ENCODE measurements at regions of chr17 and their contacts with region 1.

Region 1: DNA sequence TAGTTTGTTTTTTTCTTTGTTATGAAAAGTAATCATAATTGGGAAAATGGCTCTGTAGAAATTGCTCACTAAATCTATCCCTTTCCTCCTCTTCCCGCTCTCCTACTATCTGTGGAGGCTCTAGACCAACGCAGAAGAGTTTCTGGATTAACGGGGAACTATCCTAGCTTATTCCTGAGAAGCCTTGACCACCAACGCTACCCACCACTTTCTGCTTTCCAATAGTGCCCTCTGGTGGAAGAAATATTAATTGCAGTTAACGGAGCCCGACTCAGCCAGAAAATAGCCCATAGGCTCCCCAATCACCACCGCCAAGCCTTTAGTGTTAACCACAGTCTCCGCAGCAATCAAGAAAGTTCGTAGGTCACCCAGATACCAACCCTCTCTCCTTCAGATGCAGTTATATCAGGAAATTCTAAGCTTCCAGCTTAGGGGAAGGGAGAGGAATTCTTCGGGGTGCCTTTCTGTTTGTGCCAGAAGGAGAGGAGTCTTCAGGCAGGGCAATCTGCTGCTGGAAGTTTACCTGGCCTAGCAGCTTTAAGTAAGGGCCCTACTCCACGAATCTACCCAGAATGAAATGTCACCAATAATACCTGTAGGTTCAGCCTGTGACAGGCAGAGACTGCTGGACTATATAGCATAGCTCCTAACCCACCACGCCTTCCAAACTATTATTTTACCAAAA is 23.0 kb upstream of the NSRP1 start:
- DNase-seq: peak; percentile 72
- ATAC-seq: peak; percentile 92
- H3K4me3 Mint-ChIP-seq: no peak overlapping the region
- H3K27ac Mint-ChIP-seq: no peak overlapping the region
- H3K4me1 Mint-ChIP-seq: 0 out of 2 replicates have a peak, but pooled peaks cover 3% of the 10 kb centered on the region
- H3K27me3 Mint-ChIP-seq: no peaks in the 10 kb centered on the region; the same call in 1 of the 2 replicates
- CTCF ChIP-seq: peak; percentile 94

Region 2: DNA sequence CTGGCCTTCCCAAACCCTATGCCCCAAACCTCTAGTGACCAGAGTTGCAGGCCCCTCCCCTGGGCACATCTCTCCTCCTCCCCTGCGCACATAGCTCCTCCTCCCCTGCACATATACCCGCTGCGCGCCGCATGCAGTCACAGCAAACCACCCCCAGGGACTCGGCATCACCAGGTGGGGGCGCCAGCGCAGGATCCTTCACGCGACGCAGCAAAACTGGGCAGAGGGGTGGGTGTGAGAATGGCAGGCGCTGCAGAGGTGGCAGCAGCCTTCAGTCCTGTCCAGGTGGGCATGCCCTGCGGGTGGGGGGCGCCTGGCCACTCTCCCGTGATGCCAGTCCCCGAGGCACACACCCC is 476.5 kb before region 1 on chr17:
- CTCF ChIA-PET with region 1: interaction called, 30 read pairs
- POLR2A ChIA-PET with region 1: no interaction called
- DNase-seq: peak; percentile 86
- ATAC-seq: peak; percentile 27
- H3K4me3 Mint-ChIP-seq: peak overlapping the region; percentile 80
- H3K27ac Mint-ChIP-seq: no peak overlapping the region
- H3K4me1 Mint-ChIP-seq: peaks cover 53% of the 10 kb centered on the region
- H3K27me3 Mint-ChIP-seq: peaks cover 80% of the 10 kb centered on the region
- CTCF ChIP-seq: peak; percentile 49

Region 3: GRCh38 chr17:29777663-29778062 is 315.9 kb before region 1 on chr17:
- CTCF ChIA-PET with region 1: interaction called, 16 read pairs
- POLR2A ChIA-PET with region 1: no interaction called
- DNase-seq: no peak
- ATAC-seq: no peak
- H3K4me3 Mint-ChIP-seq: no peak overlapping the region
- H3K27ac Mint-ChIP-seq: no peak overlapping the region
- H3K4me1 Mint-ChIP-seq: no peaks in the 10 kb centered on the region
- H3K27me3 Mint-ChIP-seq: no peaks in the 10 kb centered on the region
- CTCF ChIP-seq: no peak

Region 4: GRCh38 chr17:29911641-29912177 is 181.9 kb before region 1 on chr17:
- CTCF ChIA-PET with region 1: no interaction called
- POLR2A ChIA-PET with region 1: no interaction called
- DNase-seq: no peak
- ATAC-seq: no peak
- H3K4me3 Mint-ChIP-seq: no peak overlapping the region
- H3K27ac Mint-ChIP-seq: no peak overlapping the region
- H3K4me1 Mint-ChIP-seq: no peaks in the 10 kb centered on the region
- H3K27me3 Mint-ChIP-seq: no peaks in the 10 kb centered on the region
- CTCF ChIP-seq: no peak

Region 5: GRCh38 chr17:29931231-29931932 is 162.2 kb before region 1 on chr17:
- CTCF ChIA-PET with region 1: interaction called, 36 read pairs
- POLR2A ChIA-PET with region 1: interaction called, 3 read pairs
- DNase-seq: peak; percentile 23
- ATAC-seq: peak; percentile 10
- H3K4me3 Mint-ChIP-seq: no peak overlapping the region
- H3K27ac Mint-ChIP-seq: no peak overlapping the region
- H3K4me1 Mint-ChIP-seq: peaks cover 12% of the 10 kb centered on the region
- H3K27me3 Mint-ChIP-seq: no peaks in the 10 kb centered on the region
- CTCF ChIP-seq: peak; percentile 61; the same call in 1 of the 2 replicates

Region 6: DNA sequence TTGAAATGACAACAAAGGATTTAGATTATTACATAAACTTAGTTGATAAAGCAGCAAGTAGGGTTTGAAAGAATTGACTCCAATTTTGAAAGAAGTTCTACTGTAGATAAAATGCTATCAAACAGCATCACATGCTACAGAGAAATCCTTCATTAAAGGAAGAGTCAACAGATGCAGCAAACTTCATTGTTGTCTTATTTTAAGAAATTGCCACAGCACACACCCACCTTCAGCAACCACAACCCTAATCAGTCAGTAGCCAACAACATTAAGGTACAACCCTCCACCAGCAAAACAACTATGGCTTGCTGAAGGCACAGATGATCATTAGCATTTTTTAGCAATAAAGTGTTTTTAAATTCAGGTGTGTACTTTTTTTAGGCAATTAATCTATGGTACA is 52.1 kb before region 1 on chr17:
- CTCF ChIA-PET with region 1: interaction called, 14 read pairs
- POLR2A ChIA-PET with region 1: no interaction called
- DNase-seq: no peak
- ATAC-seq: no peak
- H3K4me3 Mint-ChIP-seq: no peak overlapping the region
- H3K27ac Mint-ChIP-seq: no peak overlapping the region
- H3K4me1 Mint-ChIP-seq: peaks cover 3% of the 10 kb centered on the region
- H3K27me3 Mint-ChIP-seq: peaks cover 9% of the 10 kb centered on the region
- CTCF ChIP-seq: no peak

Region 7: GRCh38 chr17:30074730-30075129 is 18.9 kb before region 1 on chr17:
- CTCF ChIA-PET with region 1: interaction called, 18 read pairs
- POLR2A ChIA-PET with region 1: no interaction called
- DNase-seq: no peak
- ATAC-seq: no peak
- H3K4me3 Mint-ChIP-seq: no peak overlapping the region
- H3K27ac Mint-ChIP-seq: no peak overlapping the region
- H3K4me1 Mint-ChIP-seq: no peaks in the 10 kb centered on the region
- H3K27me3 Mint-ChIP-seq: peaks cover 10% of the 10 kb centered on the region
- CTCF ChIP-seq: no peak

Measured in WTC11 (cell line).